Posterior cingulate gyrus (tissue), 11 donors: ENCODE measurements at regions of chr13 and their contacts with region 1.

Region 1: DNA sequence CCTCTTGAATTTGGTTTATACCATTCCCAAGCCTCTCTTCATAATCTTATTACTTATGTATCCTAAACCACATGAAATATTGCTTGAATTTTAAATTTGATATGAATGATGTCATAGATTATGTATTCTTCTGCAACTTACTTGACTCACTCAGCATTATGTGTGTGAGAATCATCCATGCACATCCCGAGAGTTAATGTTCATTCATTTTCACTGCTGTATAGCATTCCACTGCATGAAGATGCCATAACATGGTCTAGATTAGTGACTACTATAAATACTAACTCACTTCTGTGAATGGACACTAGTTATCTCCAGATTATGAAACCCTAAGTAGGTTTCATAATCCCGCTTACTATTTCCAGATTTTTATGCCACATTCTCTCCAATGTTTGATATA is 25.0 kb upstream of the RAP2A start:
- DNase-seq: no peak

Region 2: DNA sequence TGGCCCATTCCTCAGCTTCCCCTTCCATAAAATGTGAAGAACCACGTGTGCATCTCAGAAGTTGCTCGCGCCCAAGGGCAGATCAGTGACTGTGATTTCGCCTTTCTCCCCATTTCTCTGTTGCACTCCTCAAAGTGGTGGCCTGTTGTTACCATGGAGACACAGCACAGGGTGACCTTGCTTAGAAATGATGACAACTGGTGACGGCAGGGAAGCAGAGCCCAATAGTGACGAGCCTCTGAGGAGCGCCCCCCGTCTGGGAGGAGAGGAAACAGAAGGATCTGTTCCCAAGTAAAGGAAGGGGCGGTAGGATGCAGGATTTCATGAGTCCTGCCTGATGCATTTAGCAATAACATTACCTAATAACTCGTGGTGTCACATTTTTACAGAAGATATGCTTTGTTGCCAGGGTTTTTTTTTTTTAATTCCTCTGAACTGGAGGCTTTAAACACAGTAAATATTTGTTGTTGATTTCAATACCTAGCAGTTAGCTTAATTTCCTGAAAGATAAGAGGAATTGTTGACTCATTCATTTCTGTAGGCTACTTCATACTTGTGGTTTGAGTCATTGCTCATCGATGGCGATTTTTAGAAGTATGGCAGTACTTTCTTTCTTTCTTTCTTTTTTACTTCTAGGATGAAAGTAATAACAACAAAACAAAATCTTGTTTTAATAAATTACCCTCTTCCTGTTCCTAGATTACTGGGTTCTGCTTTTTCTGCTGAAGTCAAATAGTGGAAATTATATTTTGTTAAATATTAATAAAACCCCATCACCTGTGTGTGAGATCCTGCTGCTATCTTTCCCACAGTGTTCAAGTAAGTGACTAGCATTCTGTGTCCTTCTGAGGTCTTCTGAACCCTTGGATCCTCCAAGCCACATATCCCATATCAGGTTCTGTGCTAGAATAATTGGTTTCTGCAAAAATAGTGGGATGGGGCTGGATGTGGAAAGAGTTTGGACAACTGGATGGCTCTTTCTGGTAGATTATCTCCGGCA is 150.8 kb before region 1 on chr13:
- intact Hi-C with region 1: no loop called
- DNase-seq: peak in 1 of 10 donors; percentile 28

Region 3: DNA sequence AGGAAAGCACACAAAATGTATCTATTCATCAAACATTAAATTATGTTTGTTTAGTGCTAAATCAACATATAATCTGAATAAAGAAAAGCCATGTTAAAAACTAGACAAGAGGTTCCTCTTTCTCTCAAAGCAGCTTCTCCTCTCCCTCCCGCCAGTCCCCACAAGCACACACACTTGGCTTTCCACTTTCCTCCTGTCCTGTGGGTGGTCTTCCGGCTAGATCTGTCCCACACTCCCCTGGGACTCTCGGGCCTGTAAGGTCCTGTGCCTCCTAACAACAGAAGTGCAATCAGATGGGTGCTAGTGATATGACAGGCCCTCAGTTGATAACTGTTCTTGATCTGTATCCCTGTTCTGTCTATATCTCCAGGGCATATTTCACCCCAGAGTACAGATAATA is 20.6 kb before region 1 on chr13:
- intact Hi-C with region 1: loop called (anchors 1 kb)
- DNase-seq: no peak